Activated naive CD8-positive, alpha-beta T cell treated with anti-CD3 and anti-CD28 coated beads, Interleukin-2, amount 10 ng/mL, durations not matched to agents 7 days and 5 days (primary cell): ENCODE measurements at regions of chr7 and their contacts with region 1.

Region 1: GRCh38 chr7:5780801-5781496 is 514 bp downstream of the RNF216 start:
- DNase-seq: peak; percentile 70
- ATAC-seq: peak; percentile 34
- H3K4me3 Mint-ChIP-seq: peak overlapping the region; percentile 86
- H3K27ac Mint-ChIP-seq: peak overlapping the region; percentile 90
- H3K4me1 Mint-ChIP-seq: peaks cover 34% of the 10 kb centered on the region
- H3K27me3 Mint-ChIP-seq: no peaks in the 10 kb centered on the region

Region 2: GRCh38 chr7:5586279-5586962 is 194.5 kb before region 1 on chr7:
- POLR2A ChIA-PET with region 1: no interaction called
- DNase-seq: no peak
- ATAC-seq: no peak
- H3K4me3 Mint-ChIP-seq: no peak overlapping the region
- H3K27ac Mint-ChIP-seq: no peak overlapping the region
- H3K4me1 Mint-ChIP-seq: no peaks in the 10 kb centered on the region
- H3K27me3 Mint-ChIP-seq: peaks cover 23% of the 10 kb centered on the region

Region 3: DNA sequence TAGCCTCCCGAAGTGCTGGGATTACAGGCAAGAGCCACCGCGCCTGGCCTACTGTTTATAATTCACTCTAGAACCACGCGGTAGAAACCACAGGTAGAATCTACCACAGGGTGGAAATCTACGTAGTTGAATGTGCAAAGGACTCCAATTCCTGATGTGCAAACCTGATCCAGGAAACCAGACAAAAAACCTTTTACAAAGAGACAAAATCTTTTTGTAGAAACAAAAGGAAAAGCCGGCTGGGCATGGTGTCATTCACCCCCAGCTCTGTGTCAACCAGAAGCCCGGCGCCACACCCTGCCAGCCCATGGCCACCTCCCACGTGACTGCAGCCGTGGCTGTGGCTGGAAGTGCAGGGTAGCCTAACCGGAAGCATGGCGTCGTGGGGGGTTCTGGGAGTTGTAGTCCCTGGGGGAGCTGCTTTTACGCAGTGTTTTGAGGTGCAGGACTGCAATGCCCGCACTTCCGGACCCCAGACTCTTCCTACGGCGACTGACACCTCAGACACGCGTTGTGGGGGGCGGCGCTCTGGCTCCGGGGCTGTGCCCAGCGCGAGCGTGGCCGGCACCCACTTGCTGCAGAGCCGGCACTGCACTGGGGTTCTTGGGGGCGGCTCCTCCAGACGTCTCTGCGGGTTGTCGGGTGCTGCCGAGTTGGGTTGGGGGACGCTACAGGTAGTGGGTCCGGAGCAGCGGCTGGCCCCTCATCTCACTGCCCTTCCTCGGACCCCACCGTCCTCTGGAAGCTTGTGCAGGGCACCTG is 42.0 kb after region 1 on chr7:
- POLR2A ChIA-PET with region 1: interaction called, 10 read pairs
- DNase-seq: peak; percentile 93
- ATAC-seq: peak; percentile 94
- H3K4me3 Mint-ChIP-seq: peak overlapping the region; percentile 83
- H3K27ac Mint-ChIP-seq: peak overlapping the region; percentile 71
- H3K4me1 Mint-ChIP-seq: peaks cover 18% of the 10 kb centered on the region
- H3K27me3 Mint-ChIP-seq: no peaks in the 10 kb centered on the region

Region 4: GRCh38 chr7:5872326-5872725 is 91.4 kb after region 1 on chr7:
- POLR2A ChIA-PET with region 1: no interaction called
- DNase-seq: no peak
- ATAC-seq: no peak
- H3K4me3 Mint-ChIP-seq: no peak overlapping the region
- H3K27ac Mint-ChIP-seq: no peak overlapping the region
- H3K4me1 Mint-ChIP-seq: no peaks in the 10 kb centered on the region
- H3K27me3 Mint-ChIP-seq: no peaks in the 10 kb centered on the region